Endothelial cell of umbilical vein (primary cell): ENCODE measurements at regions of chr4 and their contacts with region 1.

Region 1: GRCh38 chr4:85968945-85969819 is 390.7 kb downstream of the MAPK10 start:
- DNase-seq: peak; percentile 82
- H3K4me3 ChIP-seq: no peak overlapping the region
- H3K27ac ChIP-seq: peak overlapping the region; percentile 43
- H3K4me1 ChIP-seq: peaks cover 52% of the 10 kb centered on the region
- H3K27me3 ChIP-seq: no peaks in the 10 kb centered on the region
- CTCF ChIP-seq: peak; percentile 16 to 38
- POLR2A ChIP-seq: no peak

Region 2: DNA sequence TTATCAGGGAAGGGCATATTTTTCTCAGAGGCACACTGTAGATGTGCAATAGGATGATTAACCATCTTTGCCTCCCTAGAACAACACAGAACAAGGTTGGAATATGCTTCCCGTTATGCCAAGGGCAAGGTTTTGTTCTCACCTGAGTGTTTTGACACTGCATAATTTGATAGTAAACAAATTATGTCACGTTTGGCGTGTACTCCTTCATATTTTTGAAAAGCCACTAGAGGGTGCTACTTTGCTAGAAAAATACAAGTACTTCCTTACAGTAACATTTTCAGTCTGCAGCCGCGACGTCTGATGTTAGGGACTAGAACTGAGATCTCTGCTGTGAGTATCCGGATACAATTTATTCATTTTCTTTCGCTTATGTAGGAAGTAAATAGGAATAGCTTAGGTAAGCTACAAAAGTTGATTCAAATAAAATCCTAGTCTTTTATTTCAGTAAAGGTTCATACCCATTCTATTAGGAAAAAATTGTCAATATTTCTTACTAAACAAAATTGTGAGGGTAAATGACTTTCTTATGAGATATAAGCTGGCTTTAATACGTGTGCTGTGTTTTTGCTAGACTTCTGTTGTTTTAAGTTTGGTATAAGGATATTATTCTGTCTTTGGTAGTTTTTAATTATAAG is 821.6 kb before region 1 on chr4:
- CTCF ChIA-PET with region 1: interaction called, 5 read pairs
- POLR2A ChIA-PET with region 1: no interaction called
- dilution Hi-C with region 1: no loop called
- intact Hi-C with region 1: loop called (anchors 5 kb)
- DNase-seq: peak; percentile 66
- H3K4me3 ChIP-seq: no peak overlapping the region
- H3K27ac ChIP-seq: no peak overlapping the region
- H3K4me1 ChIP-seq: no peaks in the 10 kb centered on the region
- H3K27me3 ChIP-seq: peaks cover 12 to 32% of the 10 kb centered on the region in 2 experiments
- CTCF ChIP-seq: peak; percentile 38 to 44
- POLR2A ChIP-seq: no peak

Region 3: GRCh38 chr4:85370430-85371032 is 598.7 kb before region 1 on chr4:
- CTCF ChIA-PET with region 1: no interaction called
- POLR2A ChIA-PET with region 1: no interaction called
- dilution Hi-C with region 1: no loop called
- intact Hi-C with region 1: loop called (anchors 5 kb)
- DNase-seq: peak; percentile 40
- H3K4me3 ChIP-seq: no peak overlapping the region
- H3K27ac ChIP-seq: no peak overlapping the region
- H3K4me1 ChIP-seq: no peaks in the 10 kb centered on the region
- H3K27me3 ChIP-seq: peaks cover 5 to 29% of the 10 kb centered on the region in 2 experiments
- CTCF ChIP-seq: peak; percentile 71 to 84
- POLR2A ChIP-seq: no peak

Region 4: DNA sequence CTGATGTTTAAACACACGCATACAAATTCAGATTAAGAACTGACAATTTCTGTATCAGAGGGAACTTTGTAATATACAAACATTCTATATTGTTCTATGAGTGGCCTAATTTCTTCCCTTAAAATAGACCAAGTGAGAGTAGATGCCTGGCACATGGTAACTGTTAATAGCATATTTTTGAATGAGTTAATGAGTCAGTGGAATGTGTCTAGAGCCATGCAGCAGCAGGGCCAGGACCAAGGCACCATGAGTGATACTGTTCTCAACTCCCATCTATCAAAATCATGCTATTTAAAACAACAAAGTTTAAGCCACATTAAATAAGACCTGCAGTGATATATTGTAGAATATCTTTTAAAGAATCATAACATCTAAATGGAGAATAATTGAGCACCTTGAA is 395.9 kb before region 1 on chr4:
- CTCF ChIA-PET with region 1: no interaction called
- POLR2A ChIA-PET with region 1: no interaction called
- dilution Hi-C with region 1: no loop called
- intact Hi-C with region 1: no loop called
- DNase-seq: no peak
- H3K4me3 ChIP-seq: no peak overlapping the region
- H3K27ac ChIP-seq: no peak overlapping the region
- H3K4me1 ChIP-seq: no peaks in the 10 kb centered on the region
- H3K27me3 ChIP-seq: peaks cover 0 to 6% of the 10 kb centered on the region in 2 experiments
- CTCF ChIP-seq: no peak
- POLR2A ChIP-seq: no peak

Region 5: GRCh38 chr4:85756938-85757337 is 212.2 kb before region 1 on chr4:
- CTCF ChIA-PET with region 1: interaction called, 26 read pairs
- POLR2A ChIA-PET with region 1: no interaction called
- dilution Hi-C with region 1: no loop called
- intact Hi-C with region 1: loop called (anchors 1 kb)
- DNase-seq: peak; percentile 68
- H3K4me3 ChIP-seq: no peak overlapping the region
- H3K27ac ChIP-seq: no peak overlapping the region
- H3K4me1 ChIP-seq: peaks cover 22% of the 10 kb centered on the region
- H3K27me3 ChIP-seq: no peaks in the 10 kb centered on the region
- CTCF ChIP-seq: peak; percentile 38 to 57
- POLR2A ChIP-seq: no peak

Region 6: GRCh38 chr4:85761803-85762528 is 207.2 kb before region 1 on chr4:
- CTCF ChIA-PET with region 1: interaction called, 26 read pairs
- POLR2A ChIA-PET with region 1: no interaction called
- dilution Hi-C with region 1: no loop called
- intact Hi-C with region 1: loop called (anchors 1 kb)
- DNase-seq: peak; percentile 99
- H3K4me3 ChIP-seq: peak overlapping the region in 2 of 3 experiments; percentile 21 to 60
- H3K27ac ChIP-seq: peak overlapping the region; percentile 90
- H3K4me1 ChIP-seq: peaks cover 53% of the 10 kb centered on the region
- H3K27me3 ChIP-seq: no peaks in the 10 kb centered on the region
- CTCF ChIP-seq: no peak
- POLR2A ChIP-seq: no peak

Region 7: GRCh38 chr4:85826060-85826678 is 143.0 kb before region 1 on chr4:
- CTCF ChIA-PET with region 1: interaction called, 4 read pairs
- POLR2A ChIA-PET with region 1: no interaction called
- dilution Hi-C with region 1: no loop called
- intact Hi-C with region 1: loop called (anchors 1 kb)
- DNase-seq: peak; percentile 66
- H3K4me3 ChIP-seq: no peak overlapping the region
- H3K27ac ChIP-seq: peak overlapping the region; percentile 48
- H3K4me1 ChIP-seq: peaks cover 52% of the 10 kb centered on the region
- H3K27me3 ChIP-seq: no peaks in the 10 kb centered on the region
- CTCF ChIP-seq: no peak
- POLR2A ChIP-seq: no peak

Region 8: GRCh38 chr4:86032476-86033022 is 63.4 kb after region 1 on chr4:
- CTCF ChIA-PET with region 1: interaction called, 14 read pairs
- POLR2A ChIA-PET with region 1: no interaction called
- dilution Hi-C with region 1: no loop called
- intact Hi-C with region 1: loop called (anchors 2 kb)
- DNase-seq: no peak
- H3K4me3 ChIP-seq: no peak overlapping the region
- H3K27ac ChIP-seq: peak overlapping the region; percentile 50
- H3K4me1 ChIP-seq: peaks cover 40% of the 10 kb centered on the region
- H3K27me3 ChIP-seq: no peaks in the 10 kb centered on the region
- CTCF ChIP-seq: no peak
- POLR2A ChIP-seq: no peak